ENCODE measurements at regions of chr15 and their contacts with region 1.

Region 1: DNA sequence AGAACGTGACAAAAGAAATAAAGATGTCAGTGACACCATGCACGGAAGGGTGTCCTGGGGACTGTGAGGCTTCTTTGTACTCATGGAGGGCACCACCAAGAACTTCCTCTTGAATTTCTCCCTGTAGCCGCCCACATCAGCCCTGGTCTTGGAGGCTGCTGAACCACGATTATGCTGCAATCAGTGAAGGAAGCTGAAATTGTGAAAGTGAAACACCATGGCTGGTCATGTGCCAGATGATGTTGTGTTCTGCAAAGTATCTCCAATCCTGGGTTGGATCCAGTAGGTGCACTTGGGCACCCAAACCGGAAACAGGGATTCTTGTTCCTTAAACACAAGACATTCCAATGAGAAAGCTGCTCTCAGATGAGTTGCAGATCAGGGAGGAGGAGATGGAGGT is 104.4 kb upstream of the GOLGA6L6 start:
- DNase-seq: no peak
- ATAC-seq: no peak
- H3K4me3 ChIP-seq: no peak overlapping the region
- H3K27ac ChIP-seq: no peak overlapping the region
- H3K4me1 ChIP-seq: no peaks in the 10 kb centered on the region
- H3K27me3 ChIP-seq: no peaks in the 10 kb centered on the region
- CTCF ChIP-seq: no peak
- POLR2A ChIP-seq: no peak
- RAD21 ChIP-seq: no peak

Region 2: GRCh38 chr15:19944261-19944888 is 701.6 kb before region 1 on chr15:
- CTCF ChIA-PET with region 1: no interaction called
- POLR2A ChIA-PET with region 1: no interaction called
- dilution Hi-C with region 1: no loop called
- in situ Hi-C with region 1: no loop called
- intact Hi-C with region 1: no loop called
- DNase-seq: no peak
- ATAC-seq: no peak
- H3K4me3 ChIP-seq: no peak overlapping the region
- H3K27ac ChIP-seq: no peak overlapping the region
- H3K4me1 ChIP-seq: no peaks in the 10 kb centered on the region
- H3K27me3 ChIP-seq: no peaks in the 10 kb centered on the region
- CTCF ChIP-seq: no peak
- POLR2A ChIP-seq: no peak
- RAD21 ChIP-seq: no peak

Region 3: GRCh38 chr15:20659265-20659664 is 13.3 kb after region 1 on chr15:
- CTCF ChIA-PET with region 1: no interaction called
- POLR2A ChIA-PET with region 1: no interaction called
- dilution Hi-C with region 1: no loop called
- in situ Hi-C with region 1: no loop called
- intact Hi-C with region 1: loop called (anchors 1 kb)
- DNase-seq: no peak
- ATAC-seq: no peak
- H3K4me3 ChIP-seq: no peak overlapping the region
- H3K27ac ChIP-seq: no peak overlapping the region
- H3K4me1 ChIP-seq: no peaks in the 10 kb centered on the region
- H3K27me3 ChIP-seq: no peaks in the 10 kb centered on the region
- CTCF ChIP-seq: no peak
- POLR2A ChIP-seq: no peak
- RAD21 ChIP-seq: no peak

Region 4: GRCh38 chr15:20665641-20666040 is 19.7 kb after region 1 on chr15:
- CTCF ChIA-PET with region 1: no interaction called
- POLR2A ChIA-PET with region 1: no interaction called
- dilution Hi-C with region 1: no loop called
- in situ Hi-C with region 1: no loop called
- intact Hi-C with region 1: loop called (anchors 1 kb)
- DNase-seq: no peak
- ATAC-seq: no peak
- H3K4me3 ChIP-seq: no peak overlapping the region
- H3K27ac ChIP-seq: no peak overlapping the region
- H3K4me1 ChIP-seq: no peaks in the 10 kb centered on the region
- H3K27me3 ChIP-seq: no peaks in the 10 kb centered on the region
- CTCF ChIP-seq: no peak
- POLR2A ChIP-seq: no peak
- RAD21 ChIP-seq: no peak